ENCODE measurements at regions of chr16 and their contacts with region 1.

Region 1: GRCh38 chr16:14418795-14419225 is 211.2 kb downstream of the PARN start:
- DNase-seq: peak; percentile 85
- H3K4me3 ChIP-seq: no peak overlapping the region
- H3K27ac ChIP-seq: peak overlapping the region in 3 of 4 donors; percentile 78 to 82 (median 80)
- H3K4me1 ChIP-seq: peaks cover 0 to 25% (median 23%) of the 10 kb centered on the region in 4 donors
- H3K27me3 ChIP-seq: no peaks in the 10 kb centered on the region
- CTCF ChIP-seq: no peak
- EP300 ChIP-seq: peak; percentile 44 to 91 (median 85)
- POLR2A ChIP-seq: no peak

Region 2: GRCh38 chr16:14013571-14014282 is 405.1 kb before region 1 on chr16:
- intact Hi-C with region 1: no loop called
- DNase-seq: no peak
- H3K4me3 ChIP-seq: no peak overlapping the region
- H3K27ac ChIP-seq: peak overlapping the region; percentile 6 to 73 (median 37)
- H3K4me1 ChIP-seq: peaks cover 0 to 3% (median 0%) of the 10 kb centered on the region in 4 donors
- H3K27me3 ChIP-seq: no peaks in the 10 kb centered on the region
- CTCF ChIP-seq: no peak
- EP300 ChIP-seq: no peak
- POLR2A ChIP-seq: no peak

Region 3: DNA sequence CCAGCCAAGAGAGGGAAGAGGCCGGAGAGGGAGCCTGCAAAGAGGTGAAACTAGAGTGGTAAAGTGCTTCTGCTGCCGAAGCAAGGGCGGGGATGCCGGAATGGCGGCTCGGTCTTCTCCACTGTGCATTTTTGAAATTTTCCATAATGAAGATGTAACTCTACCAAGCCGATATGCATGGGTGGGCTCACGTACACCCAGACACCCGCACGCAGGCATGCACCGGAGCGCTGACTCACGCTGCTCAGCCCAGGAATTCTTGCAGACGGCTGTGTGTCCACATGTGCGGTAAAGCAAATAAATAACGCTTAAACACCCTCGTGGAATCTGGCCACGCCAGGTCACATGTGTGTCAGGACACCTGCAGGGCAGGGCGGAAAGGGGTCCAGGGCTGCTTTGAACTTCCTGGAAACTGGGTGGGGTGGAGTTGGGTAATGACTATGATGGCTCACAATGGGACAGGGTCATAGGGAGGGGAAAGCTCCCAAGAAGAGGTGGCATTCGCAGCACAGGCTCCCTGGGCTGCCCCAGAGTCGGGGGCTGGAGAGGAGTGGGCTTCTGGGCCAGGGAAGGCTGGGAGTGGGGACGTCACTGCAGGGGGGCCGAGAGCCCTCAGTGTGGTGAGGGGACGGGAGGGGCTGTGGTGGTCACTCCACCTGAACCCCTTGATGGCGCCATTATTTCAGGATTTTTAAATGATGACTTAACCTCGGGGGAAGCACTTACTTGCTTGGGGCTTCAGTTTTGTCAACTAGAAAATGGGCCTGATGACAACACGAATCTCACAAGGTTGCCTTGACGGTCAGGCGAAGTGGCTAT is 54.2 kb before region 1 on chr16:
- intact Hi-C with region 1: loop called (anchors 2 kb)
- DNase-seq: no peak
- H3K4me3 ChIP-seq: no peak overlapping the region
- H3K27ac ChIP-seq: peak overlapping the region in 2 of 4 donors; percentile 2 to 82
- H3K4me1 ChIP-seq: peaks cover 0 to 27% (median 23%) of the 10 kb centered on the region in 4 donors
- H3K27me3 ChIP-seq: no peaks in the 10 kb centered on the region
- CTCF ChIP-seq: no peak
- EP300 ChIP-seq: no peak
- POLR2A ChIP-seq: no peak

Region 4: DNA sequence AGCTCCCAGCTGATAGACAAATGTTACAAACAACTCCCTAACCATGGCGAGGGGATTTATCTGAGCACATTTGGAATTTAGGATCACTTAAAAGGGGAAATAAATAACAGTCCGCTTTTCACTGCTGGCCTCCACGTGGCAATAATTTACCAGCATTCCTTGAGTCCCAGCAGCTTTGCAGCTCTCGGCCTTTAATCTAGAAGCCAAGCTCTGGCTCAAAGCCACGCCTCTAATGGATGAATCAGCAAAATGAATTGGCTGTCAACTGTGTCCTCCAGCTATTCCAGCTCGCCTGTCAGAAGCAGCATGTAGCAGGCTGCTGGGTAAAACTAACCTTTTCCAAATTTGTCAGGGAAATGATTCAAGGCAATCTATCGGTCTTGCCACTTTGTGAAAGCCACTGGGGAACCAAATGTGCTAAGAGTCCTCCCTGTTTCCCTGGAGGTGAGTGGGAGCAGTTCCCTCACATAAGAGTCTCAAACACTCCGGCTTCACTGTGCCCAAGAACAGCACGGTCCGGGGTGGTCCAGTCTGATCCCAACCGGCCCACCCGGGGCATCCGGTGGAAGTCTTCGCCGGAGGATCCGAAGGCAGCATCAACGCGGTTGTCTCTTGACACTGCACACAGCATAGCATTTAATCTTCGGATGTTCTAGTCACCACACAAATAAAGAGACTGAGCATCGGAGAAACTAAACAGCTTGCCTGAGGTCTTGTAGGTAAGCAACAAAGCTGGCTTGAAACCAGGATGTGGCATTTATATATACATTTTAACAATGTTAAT is 67.9 kb after region 1 on chr16:
- intact Hi-C with region 1: loop called (anchors 2 kb)
- DNase-seq: peak; percentile 94
- H3K4me3 ChIP-seq: peak overlapping the region; percentile 6 to 41 (median 34)
- H3K27ac ChIP-seq: peak overlapping the region; percentile 75 to 79 (median 78)
- H3K4me1 ChIP-seq: peaks cover 0 to 22% (median 19%) of the 10 kb centered on the region in 4 donors
- H3K27me3 ChIP-seq: no peaks in the 10 kb centered on the region
- CTCF ChIP-seq: no peak
- EP300 ChIP-seq: peak in 2 of 4 donors; percentile 38 to 46
- POLR2A ChIP-seq: no peak

Region 5: DNA sequence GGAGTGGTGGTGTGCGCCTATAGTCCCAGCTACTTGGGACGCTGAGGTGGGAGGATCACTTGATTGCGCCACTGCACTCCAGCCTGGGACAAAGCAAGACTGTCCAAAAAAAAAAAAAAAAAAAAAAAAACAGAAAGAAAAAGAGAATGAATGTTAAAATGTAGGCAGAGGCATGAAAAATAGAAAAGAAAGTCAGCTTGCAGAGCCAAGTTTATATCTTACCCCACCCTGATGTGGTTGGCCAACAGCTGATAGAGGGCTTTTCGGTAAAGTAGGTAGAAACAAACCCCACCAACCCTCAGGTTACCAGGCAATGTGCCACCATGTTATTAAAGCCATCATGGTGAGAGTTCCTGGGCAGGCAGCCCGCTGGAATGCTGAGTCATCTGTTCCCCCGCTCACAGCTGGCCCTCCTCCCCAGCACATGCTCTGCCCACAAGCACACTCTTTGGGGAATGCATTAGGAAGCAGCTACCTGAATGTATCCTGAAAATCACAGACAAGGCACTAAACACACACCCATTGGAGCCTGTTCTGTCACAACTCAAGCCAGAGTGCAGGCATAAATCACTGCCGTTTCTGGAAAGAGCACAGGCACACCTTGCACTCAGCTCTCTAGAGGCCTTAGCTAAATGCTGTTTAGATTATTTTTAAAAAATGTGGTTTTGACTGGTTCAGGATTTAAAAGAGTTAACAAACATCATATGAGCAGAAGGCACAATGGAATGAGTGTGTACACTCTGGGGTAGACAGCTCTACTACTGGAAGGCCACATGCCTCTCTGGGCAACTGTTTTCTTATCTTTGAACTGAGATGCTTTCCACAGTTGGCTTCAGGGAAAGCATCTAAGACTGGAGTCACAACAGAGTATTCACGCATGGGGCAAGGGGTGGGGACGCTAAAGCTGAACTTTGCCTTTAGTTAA is 82.8 kb after region 1 on chr16:
- intact Hi-C with region 1: loop called (anchors 5 kb)
- DNase-seq: peak; percentile 97
- H3K4me3 ChIP-seq: no peak overlapping the region
- H3K27ac ChIP-seq: peak overlapping the region; percentile 68 to 83 (median 77)
- H3K4me1 ChIP-seq: peaks cover 0 to 49% (median 36%) of the 10 kb centered on the region in 4 donors
- H3K27me3 ChIP-seq: no peaks in the 10 kb centered on the region
- CTCF ChIP-seq: no peak
- EP300 ChIP-seq: peak in 2 of 4 donors; percentile 29 to 62
- POLR2A ChIP-seq: no peak

Measured in sigmoid colon (tissue), 7 donors.